ENCODE measurements at regions of chr11 and their contacts with region 1.

Region 1: GRCh38 chr11:86660088-86660487 is 12.3 kb downstream of the ME3 start:
- DNase-seq: no peak
- ATAC-seq: peak in 5 of 8 donors; percentile 38 to 88 (median 76)
- H3K4me3 ChIP-seq: no peak overlapping the region
- H3K27ac ChIP-seq: peak overlapping the region in 1 of 10 donors; percentile 41
- H3K4me1 ChIP-seq: peaks cover 0 to 24% (median 12%) of the 10 kb centered on the region in 9 donors
- H3K27me3 ChIP-seq: no peaks in the 10 kb centered on the region
- CTCF ChIP-seq: no peak

Region 2: DNA sequence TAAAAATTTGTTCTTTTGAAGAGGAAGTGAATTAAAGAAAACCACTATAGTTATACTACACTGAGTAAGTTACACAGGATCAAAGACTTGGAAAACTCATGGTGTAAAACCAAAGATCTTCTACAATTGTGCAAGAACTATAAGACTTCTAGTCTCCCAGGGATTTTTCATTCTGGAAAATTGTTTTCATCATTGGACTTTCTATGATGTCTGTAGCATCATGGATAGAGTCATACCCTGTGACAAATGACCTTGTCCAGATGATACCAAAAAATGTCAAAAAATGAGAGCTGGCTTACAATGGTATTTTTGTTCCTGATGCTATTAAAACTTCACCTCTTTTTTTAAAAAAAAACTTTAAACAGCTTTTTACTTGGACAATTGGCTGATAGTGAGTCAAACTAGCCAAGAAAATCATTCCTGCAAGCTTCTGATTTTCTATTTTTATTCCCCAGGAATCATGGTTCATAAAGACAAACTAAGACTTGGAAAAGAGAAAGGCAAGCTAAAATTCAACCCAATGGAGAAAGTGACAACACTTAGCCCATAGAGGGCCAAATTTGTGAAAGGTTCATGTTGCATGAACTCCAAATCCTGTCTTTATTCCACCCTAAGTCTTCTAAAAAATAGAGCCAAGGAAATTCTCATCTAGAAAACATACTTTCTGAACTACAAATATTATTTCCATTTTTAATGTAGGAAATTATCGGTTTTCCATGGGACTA is 18.4 kb before region 1 on chr11:
- intact Hi-C with region 1: loop called in 1 of 10 experiments (anchors 2 kb)
- DNase-seq: no peak
- ATAC-seq: peak in 1 of 8 donors; percentile 56
- H3K4me3 ChIP-seq: no peak overlapping the region
- H3K27ac ChIP-seq: peak overlapping the region in 3 of 10 donors; percentile 9 to 35 (median 34)
- H3K4me1 ChIP-seq: peaks cover 0 to 16% (median 5%) of the 10 kb centered on the region in 9 donors
- H3K27me3 ChIP-seq: no peaks in the 10 kb centered on the region
- CTCF ChIP-seq: no peak

Measured in heart right ventricle (tissue), 16 donors.